ENCODE measurements at regions of chr6 and their contacts with region 1.

Region 1: GRCh38 chr6:138115877-138116660 is 8.8 kb upstream of the PERP start:
- DNase-seq: peak; percentile 49 to 60
- H3K4me3 ChIP-seq: no peak overlapping the region
- H3K27ac ChIP-seq: no peak overlapping the region
- H3K4me1 ChIP-seq: no peaks in the 10 kb centered on the region
- H3K27me3 ChIP-seq: no peaks in the 10 kb centered on the region
- CTCF ChIP-seq: peak; percentile 26 to 90 (median 72)
- POLR2A ChIP-seq: no peak

Region 2: DNA sequence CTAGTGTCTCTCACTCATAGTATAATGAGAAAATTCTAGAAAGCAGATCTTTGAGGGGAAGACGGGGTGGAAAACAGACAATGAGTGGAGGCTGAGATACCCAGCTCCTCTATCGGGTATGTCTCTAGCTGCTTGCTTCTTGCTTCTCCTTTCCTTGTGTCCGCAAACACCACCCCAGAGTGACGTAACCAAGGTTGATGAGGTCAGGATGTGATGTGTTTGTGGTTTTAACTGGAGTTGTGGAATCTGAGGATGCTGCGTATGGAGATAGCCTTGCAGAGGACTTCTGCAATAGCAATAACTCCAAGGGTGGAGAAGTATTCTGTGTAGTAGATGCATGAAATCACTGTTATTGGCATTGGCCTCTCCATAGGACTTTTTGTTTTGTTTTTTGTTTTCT is 764.2 kb before region 1 on chr6:
- intact Hi-C with region 1: no loop called
- DNase-seq: no peak
- H3K4me3 ChIP-seq: no peak overlapping the region
- H3K27ac ChIP-seq: no peak overlapping the region
- H3K4me1 ChIP-seq: no peaks in the 10 kb centered on the region
- H3K27me3 ChIP-seq: no peaks in the 10 kb centered on the region
- CTCF ChIP-seq: no peak
- POLR2A ChIP-seq: no peak

Region 3: DNA sequence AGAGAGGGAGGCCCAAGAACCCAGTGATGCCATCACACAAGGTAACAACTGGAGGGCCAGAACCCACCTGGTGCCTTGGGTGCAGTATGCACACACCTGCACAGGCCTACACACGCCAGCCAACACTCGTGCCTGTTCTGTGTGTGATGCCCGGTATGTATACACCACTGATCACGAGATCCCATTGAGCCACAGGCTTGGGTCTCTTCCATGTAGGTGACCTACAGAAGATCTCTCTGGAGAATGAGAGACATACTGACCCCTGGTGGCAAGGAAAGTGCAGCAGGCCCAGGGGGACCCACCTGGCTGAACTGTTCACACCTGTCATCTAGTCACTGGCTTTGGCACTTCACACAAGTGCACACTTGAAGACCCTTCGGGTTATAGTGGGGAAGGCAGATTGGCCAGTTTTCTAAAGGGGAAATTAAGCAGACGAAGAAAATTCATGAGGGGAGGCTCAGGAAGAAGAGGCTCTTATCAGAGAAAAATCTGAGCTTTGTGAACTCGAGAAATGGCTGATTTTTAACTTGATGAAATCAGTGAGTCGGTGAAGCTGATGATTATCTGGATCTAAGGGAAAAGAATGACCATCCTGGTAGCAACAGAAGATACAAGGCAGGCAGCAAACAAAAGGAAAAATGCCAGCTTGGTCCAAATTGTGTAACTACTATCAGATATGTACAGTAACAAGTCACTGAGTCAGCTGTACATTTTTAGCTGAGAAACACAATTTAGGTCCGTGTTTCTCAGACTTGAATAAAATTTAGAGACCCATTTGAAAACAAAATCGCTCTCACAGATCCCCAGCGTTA is 171.3 kb after region 1 on chr6:
- intact Hi-C with region 1: loop called (anchors 5 kb)
- DNase-seq: peak; percentile 64 to 68
- H3K4me3 ChIP-seq: no peak overlapping the region
- H3K27ac ChIP-seq: no peak overlapping the region
- H3K4me1 ChIP-seq: peaks cover 0 to 6% of the 10 kb centered on the region in 2 donors
- H3K27me3 ChIP-seq: no peaks in the 10 kb centered on the region
- CTCF ChIP-seq: peak; percentile 29 to 74 (median 43)
- POLR2A ChIP-seq: no peak

Region 4: GRCh38 chr6:138403801-138404661 is 288.0 kb after region 1 on chr6 and contains the start of gene HEBP2:
- intact Hi-C with region 1: loop called (anchors 5 kb)
- DNase-seq: peak; percentile 99
- H3K4me3 ChIP-seq: peak within 1 kb of the TSS; percentile 56 to 80 (median 71)
- H3K27ac ChIP-seq: peak within 1 kb of the TSS; percentile 84 to 94 (median 85)
- H3K4me1 ChIP-seq: peaks cover 5 to 10% of the 10 kb centered on the region in 2 donors
- H3K27me3 ChIP-seq: no peaks in the 10 kb centered on the region
- CTCF ChIP-seq: peak in 5 of 6 experiments; percentile 14 to 81 (median 54)
- POLR2A ChIP-seq: peak in 1 of 2 donors; percentile 94
- total RNA-seq, gene HEBP2: 37.0 to 80.0 (median 58.0) TPM

Region 5: GRCh38 chr6:138517635-138518034 is 401.6 kb after region 1 on chr6:
- intact Hi-C with region 1: loop called (anchors 5 kb)
- DNase-seq: peak; percentile 89 to 91
- H3K4me3 ChIP-seq: no peak overlapping the region
- H3K27ac ChIP-seq: no peak overlapping the region
- H3K4me1 ChIP-seq: no peaks in the 10 kb centered on the region
- H3K27me3 ChIP-seq: no peaks in the 10 kb centered on the region
- CTCF ChIP-seq: peak; percentile 19 to 70 (median 65)
- POLR2A ChIP-seq: no peak

Region 6: GRCh38 chr6:138588805-138589434 is 472.9 kb after region 1 on chr6:
- intact Hi-C with region 1: loop called (anchors 10 kb)
- DNase-seq: peak; percentile 31 to 45
- H3K4me3 ChIP-seq: no peak overlapping the region
- H3K27ac ChIP-seq: no peak overlapping the region
- H3K4me1 ChIP-seq: peaks cover 0 to 3% of the 10 kb centered on the region in 2 donors
- H3K27me3 ChIP-seq: no peaks in the 10 kb centered on the region
- CTCF ChIP-seq: peak; percentile 77 to 91 (median 85)
- POLR2A ChIP-seq: no peak